Transverse colon (tissue), 4 donors: ENCODE measurements at regions of chr11 and their contacts with region 1.

Region 1: GRCh38 chr11:94183886-94184264 is 55.2 kb downstream of the PANX1 start:
- DNase-seq: peak; percentile 73
- H3K4me3 ChIP-seq: no peak overlapping the region
- H3K27ac ChIP-seq: peak overlapping the region in 1 of 4 donors; percentile 21
- H3K4me1 ChIP-seq: peaks cover 0 to 20% (median 2%) of the 10 kb centered on the region in 4 donors
- H3K27me3 ChIP-seq: no peaks in the 10 kb centered on the region
- CTCF ChIP-seq: peak; percentile 65 to 85 (median 73)
- EP300 ChIP-seq: no peak
- POLR2A ChIP-seq: no peak

Region 2: GRCh38 chr11:93747122-93747521 is 436.8 kb before region 1 on chr11:
- in situ Hi-C with region 1: no loop called
- intact Hi-C with region 1: no loop called
- DNase-seq: no peak
- H3K4me3 ChIP-seq: no peak overlapping the region
- H3K27ac ChIP-seq: peak overlapping the region in 1 of 4 donors; percentile 2
- H3K4me1 ChIP-seq: peaks cover 6 to 48% (median 27%) of the 10 kb centered on the region in 4 donors
- H3K27me3 ChIP-seq: no peaks in the 10 kb centered on the region
- CTCF ChIP-seq: no peak
- EP300 ChIP-seq: no peak
- POLR2A ChIP-seq: no peak

Region 3: DNA sequence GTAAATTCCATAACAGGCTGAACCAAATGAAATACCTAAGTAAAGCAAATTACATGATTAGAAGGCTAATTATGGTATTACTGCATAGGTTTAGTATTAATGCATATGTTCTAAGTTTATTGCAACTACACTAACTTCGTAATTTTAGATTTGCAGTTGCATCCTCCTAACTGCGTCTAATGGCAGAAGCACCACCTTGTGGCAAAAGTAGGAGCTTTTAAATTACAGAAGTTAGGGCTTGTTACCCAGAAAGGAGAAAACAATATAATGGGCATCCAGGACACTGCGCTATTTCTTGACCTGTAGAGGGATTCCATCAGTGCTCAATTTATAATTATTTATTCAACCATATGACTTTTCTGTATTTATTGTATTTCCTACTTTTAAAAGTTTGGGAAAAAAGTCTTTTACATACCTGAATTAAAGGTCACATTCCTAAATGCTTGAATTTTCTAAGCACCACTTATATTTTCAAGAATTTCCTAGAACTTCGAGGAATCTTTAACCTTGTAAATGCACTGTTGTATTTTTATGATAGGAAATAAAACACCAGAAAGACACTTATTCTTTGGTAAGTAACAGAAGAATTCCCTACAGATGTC is 233.6 kb after region 1 on chr11:
- in situ Hi-C with region 1: loop called in 1 of 4 experiments (anchors 25 kb)
- intact Hi-C with region 1: loop called (anchors 10 kb)
- DNase-seq: no peak
- H3K4me3 ChIP-seq: no peak overlapping the region
- H3K27ac ChIP-seq: no peak overlapping the region
- H3K4me1 ChIP-seq: no peaks in the 10 kb centered on the region
- H3K27me3 ChIP-seq: no peaks in the 10 kb centered on the region
- CTCF ChIP-seq: peak; percentile 22 to 37 (median 30)
- EP300 ChIP-seq: no peak
- POLR2A ChIP-seq: no peak